ENCODE measurements at regions of chr1 and their contacts with region 1.

Region 1: GRCh38 chr1:238951809-238952208 is 434.6 kb upstream of the CHRM3 start:
- DNase-seq: no peak
- ATAC-seq: no peak
- H3K4me3 Mint-ChIP-seq: no peak overlapping the region
- H3K27ac Mint-ChIP-seq: no peak overlapping the region
- H3K4me1 Mint-ChIP-seq: no peaks in the 10 kb centered on the region
- H3K27me3 Mint-ChIP-seq: no peaks in the 10 kb centered on the region

Region 2: DNA sequence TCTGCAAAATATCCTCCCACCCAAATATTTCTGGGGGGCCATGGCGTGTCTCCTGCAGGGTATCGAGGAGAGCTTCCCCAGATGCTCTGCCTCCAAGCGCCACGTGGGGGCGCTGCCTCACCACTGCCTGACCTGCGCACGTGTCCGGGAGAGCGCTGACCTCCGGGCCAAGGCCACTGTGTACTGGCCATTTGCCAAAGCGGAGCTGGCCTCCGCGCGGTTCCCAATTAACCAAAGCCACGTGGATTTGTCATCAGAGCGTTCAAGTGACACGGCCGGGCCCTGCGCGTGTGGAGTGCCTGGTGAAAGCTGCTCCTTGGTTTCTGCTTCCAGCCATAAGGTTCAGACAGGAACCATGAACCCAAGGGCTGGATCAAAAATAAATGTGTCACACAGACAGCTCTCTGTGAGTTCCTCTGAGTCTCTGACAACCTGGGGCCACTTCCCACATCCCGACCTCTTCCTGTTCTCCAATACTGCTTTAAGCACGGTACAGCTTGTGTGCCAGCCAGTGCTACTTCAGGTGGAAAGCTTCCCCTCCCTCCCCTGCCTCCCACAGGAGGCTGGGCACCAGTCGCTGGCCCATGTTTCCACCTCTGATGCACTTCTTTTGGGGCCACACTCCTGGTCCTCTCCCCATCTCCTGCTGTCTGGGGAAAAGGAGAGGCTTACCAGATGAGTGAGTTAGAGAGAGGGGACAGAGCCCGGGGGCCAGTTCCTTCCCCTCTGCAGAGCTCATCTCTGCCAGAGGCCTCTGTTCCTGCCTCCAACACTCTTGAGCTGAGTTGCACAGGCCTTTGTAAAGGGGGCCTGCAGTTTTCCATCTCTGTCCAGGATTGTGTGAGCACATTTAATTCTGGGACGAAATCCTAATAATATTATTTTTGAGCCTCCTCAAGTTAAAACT is 1087.2 kb before region 1 on chr1:
- CTCF ChIA-PET with region 1: no interaction called
- POLR2A ChIA-PET with region 1: no interaction called
- intact Hi-C with region 1: loop called in 1 of 2 experiments (anchors 5 kb)
- DNase-seq: peak; percentile 52
- ATAC-seq: peak; percentile 61
- H3K4me3 Mint-ChIP-seq: no peak overlapping the region
- H3K27ac Mint-ChIP-seq: no peak overlapping the region
- H3K4me1 Mint-ChIP-seq: peaks cover 2% of the 10 kb centered on the region
- H3K27me3 Mint-ChIP-seq: peaks cover 2% of the 10 kb centered on the region

Region 3: DNA sequence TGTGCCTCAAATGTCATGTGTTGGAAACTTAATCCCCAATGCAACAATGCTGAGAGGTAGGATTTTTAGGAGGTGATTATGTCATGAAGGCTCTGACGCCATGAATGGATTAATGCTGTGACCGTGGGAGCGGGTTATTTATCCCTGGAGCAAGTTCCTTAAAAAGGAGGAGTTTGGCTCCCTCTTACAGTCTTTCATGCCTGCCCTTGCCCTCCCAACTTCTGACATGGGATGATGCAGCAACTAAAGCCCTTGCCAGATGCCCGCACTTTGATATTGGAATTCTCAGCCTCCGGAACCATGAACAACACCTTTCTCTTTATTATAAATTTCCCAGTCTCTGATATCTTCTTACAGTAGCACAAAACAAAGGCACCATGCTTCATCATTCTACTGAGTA is 250.8 kb before region 1 on chr1:
- CTCF ChIA-PET with region 1: no interaction called
- POLR2A ChIA-PET with region 1: no interaction called
- intact Hi-C with region 1: no loop called
- DNase-seq: no peak
- ATAC-seq: no peak
- H3K4me3 Mint-ChIP-seq: no peak overlapping the region
- H3K27ac Mint-ChIP-seq: no peak overlapping the region
- H3K4me1 Mint-ChIP-seq: no peaks in the 10 kb centered on the region
- H3K27me3 Mint-ChIP-seq: no peaks in the 10 kb centered on the region